ENCODE measurements at regions of chr6 and their contacts with region 1.

Region 1: DNA sequence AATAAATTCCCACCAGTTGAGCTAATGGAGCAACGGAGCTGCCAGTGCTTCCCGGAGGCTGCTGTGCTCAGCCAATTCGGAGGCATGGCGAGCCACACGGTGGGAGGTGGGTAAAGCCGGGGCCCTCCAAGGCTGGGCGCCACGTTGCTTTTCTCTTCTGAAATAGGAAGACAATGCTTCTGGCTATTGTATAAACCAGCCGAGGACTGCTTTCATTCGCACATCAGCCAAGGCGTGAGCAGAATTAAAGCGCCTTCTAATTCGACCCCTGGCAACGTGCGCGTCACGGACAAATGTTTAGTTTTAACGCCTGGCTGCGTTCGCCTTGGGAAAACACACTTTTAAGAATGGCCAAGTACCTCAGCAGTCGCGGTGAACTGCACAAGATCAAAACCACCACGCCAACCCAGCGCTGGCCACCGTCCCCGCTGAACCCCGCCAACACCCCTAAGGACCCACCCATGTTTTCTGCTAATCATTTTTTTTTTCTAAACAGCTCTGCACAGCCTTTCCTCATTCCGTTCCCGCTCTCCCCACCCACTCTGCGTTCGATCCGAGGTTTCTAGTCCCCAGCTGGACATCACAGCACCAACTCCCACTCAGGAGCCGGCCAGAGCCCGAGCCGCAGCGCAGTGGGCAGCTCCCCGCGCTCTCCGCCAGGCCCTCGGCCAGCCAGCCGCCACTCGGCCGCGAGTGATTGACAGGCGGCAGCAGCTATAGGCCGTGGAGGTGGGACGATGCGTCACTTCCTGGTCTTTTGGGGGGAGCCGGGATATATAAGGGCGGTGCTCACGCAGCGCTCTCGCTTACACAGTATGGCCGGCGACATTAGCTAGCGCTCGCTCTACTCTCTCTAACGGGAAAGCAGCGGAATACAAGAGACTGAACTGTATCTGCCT is at the start of gene AMD1:
- DNase-seq: peak; percentile 91 to 98 (median 94)
- ATAC-seq: peak; percentile 75
- H3K4me3 ChIP-seq: peak within 1 kb of the TSS; percentile 78
- H3K4me3 Mint-ChIP-seq: peak within 1 kb of the TSS; percentile 96
- H3K27ac ChIP-seq: peak within 1 kb of the TSS; percentile 82 to 91
- H3K27ac Mint-ChIP-seq: peak within 1 kb of the TSS; percentile 99
- H3K4me1 ChIP-seq: peaks cover 17% of the 10 kb centered on the region
- H3K4me1 Mint-ChIP-seq: peaks cover 37% of the 10 kb centered on the region
- H3K27me3 ChIP-seq: no peaks in the 10 kb centered on the region
- H3K27me3 Mint-ChIP-seq: no peaks in the 10 kb centered on the region
- CTCF ChIP-seq: no peak
- total RNA-seq, gene AMD1: 165 to 174 TPM

Region 2: GRCh38 chr6:110595112-110595511 is 279.1 kb before region 1 on chr6:
- CTCF ChIA-PET with region 1: no interaction called
- POLR2A ChIA-PET with region 1: no interaction called
- intact Hi-C with region 1: no loop called
- DNase-seq: no peak
- ATAC-seq: no peak
- H3K4me3 ChIP-seq: no peak overlapping the region
- H3K4me3 Mint-ChIP-seq: no peak overlapping the region
- H3K27ac ChIP-seq: no peak overlapping the region
- H3K27ac Mint-ChIP-seq: no peak overlapping the region
- H3K4me1 ChIP-seq: peaks cover 5% of the 10 kb centered on the region
- H3K4me1 Mint-ChIP-seq: no peaks in the 10 kb centered on the region
- H3K27me3 ChIP-seq: no peaks in the 10 kb centered on the region
- H3K27me3 Mint-ChIP-seq: no peaks in the 10 kb centered on the region
- CTCF ChIP-seq: no peak

Region 3: DNA sequence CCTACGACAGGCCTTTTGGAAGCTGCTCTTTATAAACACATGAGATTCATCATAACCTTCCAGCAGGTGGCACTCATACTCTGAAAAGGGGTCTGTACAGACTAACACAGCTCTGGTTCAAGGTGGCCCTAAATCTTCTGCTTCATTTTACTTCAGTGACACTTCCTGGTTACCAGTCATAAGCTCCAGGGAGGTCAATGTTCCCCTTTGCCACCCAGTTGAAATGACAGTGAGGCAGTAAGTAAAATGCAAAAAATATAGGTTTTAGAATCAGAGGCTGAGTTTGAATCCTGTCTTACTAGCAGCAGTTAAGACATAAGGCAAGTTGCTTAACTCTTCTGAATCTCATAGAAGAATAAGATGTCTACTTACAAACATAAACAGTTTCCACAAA is 191.8 kb before region 1 on chr6:
- CTCF ChIA-PET with region 1: interaction called, 28 read pairs
- POLR2A ChIA-PET with region 1: interaction called, 63 read pairs
- intact Hi-C with region 1: loop called (anchors 1 to 2 kb)
- DNase-seq: peak in 12 of 14 experiments; percentile 21 to 88 (median 60)
- ATAC-seq: peak; percentile 99
- H3K4me3 ChIP-seq: no peak overlapping the region
- H3K4me3 Mint-ChIP-seq: no peak overlapping the region
- H3K27ac ChIP-seq: no peak overlapping the region
- H3K27ac Mint-ChIP-seq: no peak overlapping the region
- H3K4me1 ChIP-seq: peaks cover 10% of the 10 kb centered on the region
- H3K4me1 Mint-ChIP-seq: peaks cover 19% of the 10 kb centered on the region
- H3K27me3 ChIP-seq: no peaks in the 10 kb centered on the region
- H3K27me3 Mint-ChIP-seq: no peaks in the 10 kb centered on the region
- CTCF ChIP-seq: peak; percentile 86

Region 4: GRCh38 chr6:110890288-110890687 is 16.1 kb after region 1 on chr6:
- CTCF ChIA-PET with region 1: interaction called, 5 read pairs
- POLR2A ChIA-PET with region 1: interaction called, 69 read pairs
- intact Hi-C with region 1: no loop called
- DNase-seq: no peak
- ATAC-seq: no peak
- H3K4me3 ChIP-seq: no peak overlapping the region
- H3K4me3 Mint-ChIP-seq: no peak overlapping the region
- H3K27ac ChIP-seq: no peak overlapping the region
- H3K27ac Mint-ChIP-seq: no peak overlapping the region
- H3K4me1 ChIP-seq: peaks cover 21% of the 10 kb centered on the region
- H3K4me1 Mint-ChIP-seq: peaks cover 34% of the 10 kb centered on the region
- H3K27me3 ChIP-seq: no peaks in the 10 kb centered on the region
- H3K27me3 Mint-ChIP-seq: no peaks in the 10 kb centered on the region
- CTCF ChIP-seq: no peak

Region 5: DNA sequence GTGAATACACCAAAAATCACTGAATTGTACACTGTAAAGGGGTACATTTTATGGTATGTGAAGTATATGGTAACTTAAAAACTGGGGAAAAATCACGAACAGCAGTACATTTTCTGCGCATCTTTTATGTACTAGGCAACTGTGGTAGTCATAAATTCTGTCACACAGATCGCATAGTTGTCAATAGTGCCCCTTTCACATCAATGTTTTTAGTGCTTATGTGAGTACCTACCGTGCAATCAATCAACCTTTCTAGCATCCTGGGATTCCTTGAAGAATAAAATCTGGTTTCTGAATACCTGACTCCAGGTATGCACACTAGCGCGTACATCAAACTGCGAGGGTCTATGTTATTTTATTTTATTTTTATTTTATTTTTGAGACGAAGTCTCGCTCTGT is 107.0 kb after region 1 on chr6:
- CTCF ChIA-PET with region 1: no interaction called
- POLR2A ChIA-PET with region 1: interaction called, 50 read pairs
- intact Hi-C with region 1: loop called (anchors 2 to 5 kb)
- DNase-seq: peak in 1 of 14 experiments; percentile 43
- ATAC-seq: peak; percentile 1
- H3K4me3 ChIP-seq: peak overlapping the region; percentile 99
- H3K4me3 Mint-ChIP-seq: peak overlapping the region; percentile 99
- H3K27ac ChIP-seq: peak overlapping the region; percentile 77 to 97
- H3K27ac Mint-ChIP-seq: peak overlapping the region; percentile 99
- H3K4me1 ChIP-seq: peaks cover 14% of the 10 kb centered on the region
- H3K4me1 Mint-ChIP-seq: peaks cover 49% of the 10 kb centered on the region
- H3K27me3 ChIP-seq: no peaks in the 10 kb centered on the region
- H3K27me3 Mint-ChIP-seq: no peaks in the 10 kb centered on the region
- CTCF ChIP-seq: no peak

Region 6: GRCh38 chr6:111483736-111484632 is 609.8 kb after region 1 on chr6:
- CTCF ChIA-PET with region 1: no interaction called
- POLR2A ChIA-PET with region 1: interaction called, 16 read pairs
- intact Hi-C with region 1: loop called in 1 of 2 experiments (anchors 10 kb)
- DNase-seq: peak in 9 of 14 experiments; percentile 51 to 95 (median 83)
- ATAC-seq: peak; percentile 55
- H3K4me3 ChIP-seq: peak overlapping the region; percentile 69
- H3K4me3 Mint-ChIP-seq: peak overlapping the region; percentile 99
- H3K27ac ChIP-seq: peak overlapping the region; percentile 97 to 98
- H3K27ac Mint-ChIP-seq: peak overlapping the region; percentile 98
- H3K4me1 ChIP-seq: peaks cover 30% of the 10 kb centered on the region
- H3K4me1 Mint-ChIP-seq: peaks cover 60% of the 10 kb centered on the region
- H3K27me3 ChIP-seq: no peaks in the 10 kb centered on the region
- H3K27me3 Mint-ChIP-seq: no peaks in the 10 kb centered on the region
- CTCF ChIP-seq: no peak

Measured in CD4-positive, alpha-beta T cell (primary cell).